Activated CD4-positive, alpha-beta T cell treated with anti-CD3 and anti-CD28 coated beads for 36 hours (primary cell): ENCODE measurements at regions of chr5 and their contacts with region 1.

Region 1: DNA sequence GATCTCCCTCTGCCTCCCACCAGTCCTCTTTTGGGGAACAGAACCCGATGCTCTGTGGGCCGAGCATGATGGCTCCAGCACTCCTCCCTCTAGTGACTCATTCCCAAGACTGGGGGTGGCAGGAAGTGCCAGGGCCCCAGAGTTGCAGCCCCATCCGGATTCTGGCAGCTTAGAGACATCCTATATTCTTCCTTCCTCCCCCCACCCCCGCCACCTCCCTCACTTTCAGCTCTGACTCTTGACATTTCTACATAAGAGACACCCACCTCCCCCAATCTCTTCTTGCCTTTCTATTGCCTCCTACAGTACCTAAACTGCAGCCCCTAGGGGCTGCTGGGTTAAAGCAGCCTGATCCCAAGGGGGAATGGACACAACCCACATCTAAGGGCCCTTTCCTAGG is 47.1 kb upstream of the MATR3 start:
- DNase-seq: peak; percentile 84
- ATAC-seq: peak; percentile 100
- H3K4me3 Mint-ChIP-seq: no peak overlapping the region
- H3K27ac Mint-ChIP-seq: peak overlapping the region; percentile 75
- H3K4me1 Mint-ChIP-seq: peaks cover 24% of the 10 kb centered on the region
- H3K27me3 Mint-ChIP-seq: peaks cover 2% of the 10 kb centered on the region

Region 2: GRCh38 chr5:138819081-138819480 is 427.3 kb before region 1 on chr5:
- CTCF ChIA-PET with region 1: no interaction called
- POLR2A ChIA-PET with region 1: no interaction called
- intact Hi-C with region 1: loop called in 1 of 2 experiments (anchors 10 kb)
- DNase-seq: no peak
- ATAC-seq: no peak
- H3K4me3 Mint-ChIP-seq: no peak overlapping the region
- H3K27ac Mint-ChIP-seq: no peak overlapping the region
- H3K4me1 Mint-ChIP-seq: no peaks in the 10 kb centered on the region
- H3K27me3 Mint-ChIP-seq: peaks cover 9% of the 10 kb centered on the region

Region 3: GRCh38 chr5:139197710-139198669 is 48.4 kb before region 1 on chr5 and contains the start of gene SIL1:
- CTCF ChIA-PET with region 1: interaction called, 4 read pairs
- POLR2A ChIA-PET with region 1: no interaction called
- intact Hi-C with region 1: loop called in 1 of 2 experiments (anchors 2 kb)
- DNase-seq: peak; percentile 98
- ATAC-seq: peak; percentile 100
- H3K4me3 Mint-ChIP-seq: peak within 1 kb of the TSS; percentile 90
- H3K27ac Mint-ChIP-seq: peak within 1 kb of the TSS; percentile 97
- H3K4me1 Mint-ChIP-seq: peaks cover 18% of the 10 kb centered on the region
- H3K27me3 Mint-ChIP-seq: peaks cover 2% of the 10 kb centered on the region
- total RNA-seq, gene SIL1: 11.2 to 14.4 TPM